Dorsolateral prefrontal cortex (tissue), 120 donors: ENCODE measurements at regions of chr7 and their contacts with region 1.

Region 1: GRCh38 chr7:99997545-99998137 is 17.8 kb upstream of the ZKSCAN1 start:
- DNase-seq: peak in 2 of 10 donors; percentile 62 to 70
- H3K4me3 ChIP-seq: peak overlapping the region; percentile 36 to 79 (median 60)
- H3K27ac ChIP-seq: peak overlapping the region; percentile 51 to 98 (median 90)
- H3K27me3 ChIP-seq: peaks cover 0 to 4% (median 0%) of the 10 kb centered on the region in 45 donors
- CTCF ChIP-seq: peak in 51 of 56 donors; percentile 18 to 68 (median 50)

Region 2: DNA sequence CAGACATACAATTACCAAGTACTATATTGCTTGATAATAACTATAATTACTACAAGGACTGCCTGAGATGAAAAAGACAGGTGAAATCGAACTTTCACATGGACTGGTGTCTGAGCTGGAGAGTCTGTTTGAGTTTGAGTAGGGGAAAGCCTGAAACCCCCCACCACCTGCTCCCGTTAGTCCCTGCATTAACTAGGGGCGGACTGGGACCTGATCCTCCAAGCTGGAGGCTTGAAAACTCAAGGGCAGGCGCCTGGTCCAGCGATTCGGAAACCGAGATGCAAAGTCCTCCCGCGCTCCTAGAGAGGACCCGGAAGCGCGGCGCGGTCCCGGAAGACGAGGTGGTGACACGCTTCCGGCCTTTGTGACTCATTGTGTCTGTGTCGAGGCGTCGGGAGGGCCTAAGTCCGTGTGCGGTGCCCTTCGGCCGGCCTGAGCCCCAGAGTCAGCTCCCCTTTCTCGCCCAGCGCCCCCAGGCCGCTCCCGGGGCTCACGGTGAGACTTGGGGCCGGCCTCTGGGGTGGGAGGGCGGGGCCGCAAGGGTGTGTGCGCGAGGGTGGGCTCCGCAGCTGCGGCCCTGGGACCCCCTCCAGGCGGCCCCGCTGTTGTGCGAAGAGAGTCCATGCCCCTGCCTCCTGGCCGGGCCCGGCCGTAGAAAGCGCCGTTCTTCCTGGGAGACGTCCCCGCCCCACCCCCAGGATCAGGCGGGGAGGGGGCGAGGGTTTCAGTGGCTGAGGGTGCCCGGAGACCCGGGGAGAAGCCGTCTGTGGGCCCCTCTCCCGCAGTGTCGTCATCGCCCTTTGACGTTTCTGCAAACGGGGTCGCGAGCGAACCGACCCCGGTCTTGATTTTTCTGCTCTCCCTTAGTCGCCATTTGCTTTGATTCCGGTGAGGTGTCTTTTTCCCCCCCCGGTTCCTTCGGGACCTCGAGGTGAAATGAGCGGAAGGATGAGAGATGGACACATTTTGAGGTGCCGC is 17.9 kb after region 1 on chr7 and contains the start of gene ZKSCAN1:
- intact Hi-C with region 1: loop called in 1 of 2 experiments (anchors 2 kb)
- DNase-seq: peak; percentile 84 to 93 (median 90)
- H3K4me3 ChIP-seq: peak within 1 kb of the TSS; percentile 65 to 100 (median 99)
- H3K27ac ChIP-seq: peak within 1 kb of the TSS; percentile 92 to 100 (median 99)
- H3K27me3 ChIP-seq: no peaks in the 10 kb centered on the region
- CTCF ChIP-seq: peak in 13 of 56 donors; percentile 7 to 40 (median 22)
- total RNA-seq, gene ZKSCAN1: 96.1 to 181 (median 132) TPM

Region 3: GRCh38 chr7:100081535-100082102 is 84.0 kb after region 1 on chr7 and contains the start of gene ZNF3:
- intact Hi-C with region 1: loop called in 1 of 2 experiments (anchors 10 kb)
- DNase-seq: peak; percentile 97 to 100 (median 99)
- H3K4me3 ChIP-seq: peak within 1 kb of the TSS; percentile 62 to 100 (median 97)
- H3K27ac ChIP-seq: peak within 1 kb of the TSS; percentile 28 to 97 (median 88)
- H3K27me3 ChIP-seq: no peaks in the 10 kb centered on the region
- CTCF ChIP-seq: peak; percentile 88 to 100 (median 98)
- total RNA-seq, gene ZNF3: 17.5 to 42.7 (median 26.8) TPM